ENCODE measurements at regions of chr11 and their contacts with region 1.

Region 1: GRCh38 chr11:97722065-97722464 is 1298.7 kb upstream of the CNTN5 start:
- DNase-seq: no peak
- H3K4me3 ChIP-seq: no peak overlapping the region
- H3K4me3 Mint-ChIP-seq: no peak overlapping the region
- H3K27ac Mint-ChIP-seq: peak overlapping the region; percentile 56
- H3K4me1 ChIP-seq: peaks cover 15% of the 10 kb centered on the region
- H3K4me1 Mint-ChIP-seq: peaks cover 19% of the 10 kb centered on the region
- H3K27me3 ChIP-seq: no peaks in the 10 kb centered on the region
- H3K27me3 Mint-ChIP-seq: no peaks in the 10 kb centered on the region
- CTCF ChIP-seq: no peak

Region 2: GRCh38 chr11:97580456-97580855 is 141.6 kb before region 1 on chr11:
- CTCF ChIA-PET with region 1: no interaction called
- POLR2A ChIA-PET with region 1: no interaction called
- intact Hi-C with region 1: no loop called
- DNase-seq: no peak
- H3K4me3 ChIP-seq: no peak overlapping the region
- H3K4me3 Mint-ChIP-seq: no peak overlapping the region
- H3K27ac Mint-ChIP-seq: no peak overlapping the region
- H3K4me1 ChIP-seq: peaks cover 6% of the 10 kb centered on the region; the same call in 1 of the 2 replicates
- H3K4me1 Mint-ChIP-seq: no peaks in the 10 kb centered on the region
- H3K27me3 ChIP-seq: no peaks in the 10 kb centered on the region
- H3K27me3 Mint-ChIP-seq: no peaks in the 10 kb centered on the region
- CTCF ChIP-seq: no peak

Region 3: DNA sequence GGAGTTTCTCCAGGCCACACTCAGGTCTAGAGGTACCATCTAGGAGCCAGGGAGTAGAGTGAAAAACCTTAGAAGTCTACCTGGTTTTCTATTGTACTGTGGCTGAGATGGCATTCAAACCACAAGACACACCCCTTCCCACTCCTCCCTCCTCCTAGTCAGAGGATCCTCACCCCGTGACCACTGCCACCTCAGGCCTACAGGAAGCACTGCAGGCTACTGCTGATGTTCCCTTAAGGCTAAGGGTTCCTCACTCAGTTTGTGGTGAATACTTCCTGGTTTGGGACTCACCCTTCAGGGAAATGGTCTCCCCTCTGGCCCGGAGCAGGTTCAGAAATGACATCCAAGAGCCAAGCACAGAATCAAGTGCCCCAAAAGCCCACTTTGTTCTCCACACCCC is 38.3 kb before region 1 on chr11:
- CTCF ChIA-PET with region 1: no interaction called
- POLR2A ChIA-PET with region 1: no interaction called
- intact Hi-C with region 1: loop called (anchors 1 kb)
- DNase-seq: peak; percentile 59 to 74
- H3K4me3 ChIP-seq: no peak overlapping the region
- H3K4me3 Mint-ChIP-seq: no peak overlapping the region
- H3K27ac Mint-ChIP-seq: no peak overlapping the region
- H3K4me1 ChIP-seq: no peaks in the 10 kb centered on the region
- H3K4me1 Mint-ChIP-seq: no peaks in the 10 kb centered on the region
- H3K27me3 ChIP-seq: no peaks in the 10 kb centered on the region
- H3K27me3 Mint-ChIP-seq: peaks cover 3% of the 10 kb centered on the region
- CTCF ChIP-seq: peak in 1 of 2 experiments; percentile 30

Region 4: DNA sequence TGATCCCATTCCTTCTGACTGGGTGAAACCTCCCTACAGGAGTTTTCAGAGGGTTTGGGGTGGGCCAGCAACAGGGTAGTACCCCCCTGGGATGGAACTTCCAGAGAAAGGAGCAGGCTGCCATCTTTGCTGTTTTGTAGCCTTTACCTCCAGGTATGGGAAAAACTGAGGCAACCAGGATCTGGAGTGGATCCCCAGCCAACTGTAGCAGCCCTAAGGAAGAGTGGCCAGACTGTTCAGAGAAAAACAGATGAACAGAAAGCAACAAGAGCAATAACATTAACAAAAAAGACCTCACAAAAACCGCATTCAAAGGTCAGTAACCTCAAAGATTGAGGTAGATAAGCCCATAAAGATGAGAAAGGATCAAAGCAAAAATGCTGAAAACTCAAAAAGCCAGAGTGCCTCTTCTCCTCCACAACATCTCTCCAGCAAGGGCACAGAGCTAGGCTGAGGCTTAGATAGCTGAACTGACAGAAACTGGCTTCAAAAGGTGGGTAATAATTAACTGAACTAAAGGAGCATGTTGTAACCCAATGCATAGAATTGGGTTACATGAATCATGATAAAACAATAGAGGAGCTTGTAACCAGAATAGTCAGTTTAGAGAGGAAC is 10.1 kb after region 1 on chr11:
- CTCF ChIA-PET with region 1: no interaction called
- POLR2A ChIA-PET with region 1: no interaction called
- intact Hi-C with region 1: loop called (anchors 1 kb)
- DNase-seq: peak; percentile 65 to 69
- H3K4me3 ChIP-seq: no peak overlapping the region
- H3K4me3 Mint-ChIP-seq: peak overlapping the region; percentile 7
- H3K27ac Mint-ChIP-seq: peak overlapping the region; percentile 18
- H3K4me1 ChIP-seq: peaks cover 21% of the 10 kb centered on the region
- H3K4me1 Mint-ChIP-seq: peaks cover 17% of the 10 kb centered on the region
- H3K27me3 ChIP-seq: no peaks in the 10 kb centered on the region
- H3K27me3 Mint-ChIP-seq: no peaks in the 10 kb centered on the region
- CTCF ChIP-seq: no peak

Region 5: GRCh38 chr11:97772705-97773104 is 50.6 kb after region 1 on chr11:
- CTCF ChIA-PET with region 1: no interaction called
- POLR2A ChIA-PET with region 1: no interaction called
- intact Hi-C with region 1: no loop called
- DNase-seq: no peak
- H3K4me3 ChIP-seq: no peak overlapping the region
- H3K4me3 Mint-ChIP-seq: no peak overlapping the region
- H3K27ac Mint-ChIP-seq: no peak overlapping the region
- H3K4me1 ChIP-seq: no peaks in the 10 kb centered on the region
- H3K4me1 Mint-ChIP-seq: no peaks in the 10 kb centered on the region
- H3K27me3 ChIP-seq: no peaks in the 10 kb centered on the region
- H3K27me3 Mint-ChIP-seq: no peaks in the 10 kb centered on the region
- CTCF ChIP-seq: no peak